ENCODE measurements at regions of chrX and their contacts with region 1.

Region 1: DNA sequence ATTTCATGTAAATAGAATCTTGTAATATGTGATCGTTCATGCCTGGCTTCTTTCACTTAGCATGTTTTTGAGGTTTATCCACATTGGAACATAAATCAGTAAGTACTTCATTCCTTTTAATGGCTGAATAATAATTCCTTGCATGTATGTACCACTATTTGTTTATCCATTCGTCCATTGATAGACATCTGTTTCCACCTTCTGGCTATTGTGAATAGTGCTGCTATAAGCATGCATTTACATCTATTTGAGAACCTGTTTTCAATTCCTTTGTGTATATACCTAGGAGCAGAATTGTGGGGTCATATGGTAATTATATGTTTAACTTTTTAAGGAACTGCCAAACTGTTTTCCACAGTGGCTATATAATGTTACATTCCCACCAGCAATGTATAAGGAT is 356.7 kb upstream of the DIPK2B start:
- DNase-seq: no peak
- ATAC-seq: no peak
- H3K4me3 ChIP-seq: no peak overlapping the region
- H3K27ac ChIP-seq: no peak overlapping the region
- H3K4me1 ChIP-seq: no peaks in the 10 kb centered on the region
- H3K27me3 ChIP-seq: no peaks in the 10 kb centered on the region
- CTCF ChIP-seq: peak in 2 of 5 experiments; percentile 9 to 28
- POLR2A ChIP-seq: no peak

Region 2: DNA sequence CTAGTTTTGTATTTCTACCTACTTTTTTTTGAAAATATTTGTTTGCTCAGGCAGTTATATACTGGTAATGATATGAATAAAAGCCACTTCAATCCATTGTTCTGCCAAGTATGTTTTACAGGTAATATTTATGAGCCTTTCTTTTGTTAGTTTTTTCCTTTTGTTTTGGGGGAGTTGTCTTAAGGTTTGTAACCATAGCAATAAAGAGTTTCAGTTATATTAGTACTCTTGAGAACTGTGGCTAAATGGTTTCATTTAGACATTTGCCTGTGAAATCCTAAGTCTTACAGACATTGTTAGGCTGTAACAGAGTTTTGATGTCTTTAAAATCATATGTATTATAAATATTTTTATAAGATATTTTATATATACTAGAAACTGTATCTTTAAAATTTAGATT is 506.8 kb before region 1 on chrX:
- in situ Hi-C with region 1: no loop called
- intact Hi-C with region 1: no loop called
- DNase-seq: no peak
- ATAC-seq: no peak
- H3K4me3 ChIP-seq: no peak overlapping the region
- H3K27ac ChIP-seq: no peak overlapping the region
- H3K4me1 ChIP-seq: no peaks in the 10 kb centered on the region
- H3K27me3 ChIP-seq: no peaks in the 10 kb centered on the region
- CTCF ChIP-seq: no peak
- POLR2A ChIP-seq: no peak

Region 3: GRCh38 chrX:45445745-45446412 is 111.5 kb before region 1 on chrX:
- in situ Hi-C with region 1: loop called in 1 of 4 experiments (anchors 25 kb)
- intact Hi-C with region 1: no loop called
- DNase-seq: no peak
- ATAC-seq: peak in 1 of 2 donors; percentile 90
- H3K4me3 ChIP-seq: no peak overlapping the region
- H3K27ac ChIP-seq: no peak overlapping the region
- H3K4me1 ChIP-seq: no peaks in the 10 kb centered on the region
- H3K27me3 ChIP-seq: no peaks in the 10 kb centered on the region
- CTCF ChIP-seq: no peak
- POLR2A ChIP-seq: no peak

Region 4: GRCh38 chrX:45505214-45505613 is 52.2 kb before region 1 on chrX:
- in situ Hi-C with region 1: no loop called
- intact Hi-C with region 1: no loop called
- DNase-seq: no peak
- ATAC-seq: no peak
- H3K4me3 ChIP-seq: no peak overlapping the region
- H3K27ac ChIP-seq: peak overlapping the region in 1 of 4 donors; percentile 83
- H3K4me1 ChIP-seq: peaks cover 0 to 28% of the 10 kb centered on the region in 2 donors
- H3K27me3 ChIP-seq: no peaks in the 10 kb centered on the region
- CTCF ChIP-seq: no peak
- POLR2A ChIP-seq: no peak

Region 5: DNA sequence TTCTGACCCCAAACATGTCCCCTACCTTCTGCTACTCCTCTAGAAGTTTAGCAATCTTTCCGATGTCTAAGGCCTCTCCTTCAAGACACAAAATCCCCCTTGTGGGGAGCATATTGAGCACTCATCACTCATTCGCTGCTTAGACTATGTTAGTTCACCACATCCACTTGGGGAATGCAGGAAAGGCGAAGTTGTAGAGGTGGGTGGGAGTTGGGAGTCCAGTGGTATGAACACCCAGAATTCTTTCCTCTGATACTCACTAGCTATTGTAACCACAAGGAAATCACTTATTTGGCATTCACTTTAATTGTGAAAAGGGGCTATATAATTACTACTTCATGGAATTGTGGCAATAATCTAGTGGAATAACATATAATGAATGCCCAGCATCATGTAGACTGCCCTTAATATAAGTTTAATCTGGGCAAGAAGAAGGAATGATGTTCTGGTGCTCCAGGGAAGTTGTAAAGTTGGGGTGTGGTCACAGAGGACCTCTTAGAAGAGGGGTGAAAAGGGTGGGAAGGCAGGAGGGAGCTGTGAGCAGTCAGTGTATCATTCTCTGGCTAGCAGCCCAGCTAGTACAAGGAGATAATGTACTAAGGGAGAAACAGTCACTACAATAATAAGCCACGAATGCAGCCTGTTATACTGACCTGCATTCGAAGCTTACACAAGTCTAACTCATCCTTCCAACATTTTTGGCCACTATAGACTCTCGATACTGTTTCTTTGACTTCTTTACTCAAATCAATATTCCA is 111.5 kb after region 1 on chrX:
- in situ Hi-C with region 1: loop called in 1 of 4 experiments (anchors 25 kb)
- intact Hi-C with region 1: no loop called
- DNase-seq: no peak
- ATAC-seq: no peak
- H3K4me3 ChIP-seq: no peak overlapping the region
- H3K27ac ChIP-seq: no peak overlapping the region
- H3K4me1 ChIP-seq: no peaks in the 10 kb centered on the region
- H3K27me3 ChIP-seq: no peaks in the 10 kb centered on the region
- CTCF ChIP-seq: no peak
- POLR2A ChIP-seq: no peak

Region 6: DNA sequence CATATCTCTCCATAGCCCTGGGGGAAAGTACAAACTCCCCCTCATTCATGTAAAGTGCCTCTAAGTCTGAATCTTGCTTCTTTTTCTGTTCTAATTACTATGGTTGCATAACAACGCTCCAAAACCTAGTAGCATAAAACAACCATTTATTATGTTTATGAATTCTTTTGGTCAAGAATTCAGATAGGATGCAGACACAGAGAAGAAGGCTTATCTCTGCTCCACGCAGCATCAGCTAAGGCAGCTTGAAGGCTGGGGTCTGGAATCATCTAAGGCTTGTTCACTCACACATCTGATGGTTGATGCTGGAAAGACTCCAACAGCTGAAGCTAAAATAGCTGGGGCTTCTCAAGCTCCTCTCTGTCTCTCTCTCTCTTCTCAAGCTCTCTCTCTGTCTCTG is 423.3 kb after region 1 on chrX:
- in situ Hi-C with region 1: no loop called
- intact Hi-C with region 1: no loop called
- DNase-seq: no peak
- ATAC-seq: no peak
- H3K4me3 ChIP-seq: no peak overlapping the region
- H3K27ac ChIP-seq: no peak overlapping the region
- H3K4me1 ChIP-seq: no peaks in the 10 kb centered on the region
- H3K27me3 ChIP-seq: no peaks in the 10 kb centered on the region
- CTCF ChIP-seq: no peak
- POLR2A ChIP-seq: no peak

Measured in gastrocnemius medialis (tissue), 4 donors.